ENCODE measurements at regions of chr1 and their contacts with region 1.

Region 1: DNA sequence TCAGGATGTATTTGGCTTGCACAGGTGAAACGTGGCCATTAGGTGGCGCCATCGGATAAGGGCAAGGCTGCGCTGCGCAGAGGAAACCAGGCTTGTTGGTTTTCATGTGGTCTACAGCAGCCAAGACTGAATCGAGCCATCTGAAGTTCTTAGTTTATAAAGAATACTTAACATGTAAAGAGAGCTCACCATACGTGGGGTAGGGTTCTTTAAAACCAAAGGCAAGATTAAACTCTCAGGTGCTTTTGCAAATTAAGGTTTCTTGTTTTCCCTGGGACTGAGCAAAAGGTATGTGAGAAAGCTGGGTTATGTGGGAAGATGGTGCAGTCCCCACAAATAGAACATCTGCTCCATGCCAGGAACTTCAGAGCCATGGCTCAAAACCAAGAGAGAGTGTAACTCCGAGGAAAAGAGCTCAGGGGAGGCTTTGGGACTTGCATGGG is 9.3 kb downstream of the MASP2 start:
- DNase-seq: peak; percentile 67
- ATAC-seq: peak; percentile 85
- H3K4me3 ChIP-seq: no peak overlapping the region
- H3K27ac ChIP-seq: no peak overlapping the region
- H3K4me1 ChIP-seq: no peaks in the 10 kb centered on the region
- H3K27me3 ChIP-seq: no peaks in the 10 kb centered on the region
- CTCF ChIP-seq: peak; percentile 96
- EP300 ChIP-seq: no peak
- POLR2A ChIP-seq: no peak
- RAD21 ChIP-seq: peak; percentile 94

Region 2: DNA sequence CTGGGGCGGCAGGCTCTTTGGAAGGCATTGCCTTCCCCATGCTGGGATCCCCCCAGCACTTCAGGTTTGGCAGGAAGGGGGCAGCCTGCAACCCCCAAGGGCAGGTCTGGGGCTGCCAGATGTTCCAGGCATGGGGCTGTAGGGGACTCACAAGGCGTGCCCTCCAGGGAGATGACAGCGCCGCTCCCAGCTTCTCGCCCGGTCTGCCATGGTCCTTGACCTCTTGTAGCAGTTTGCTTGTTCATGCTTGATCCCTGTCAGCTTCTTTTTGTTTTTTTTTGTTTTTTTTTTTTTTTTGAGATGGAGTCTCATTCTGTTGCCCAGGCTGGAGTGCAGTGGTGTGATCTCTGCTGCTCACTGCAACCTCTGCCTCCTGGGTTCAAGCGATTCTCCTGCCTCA is 46.9 kb before region 1 on chr1:
- CTCF ChIA-PET with region 1: no interaction called
- POLR2A ChIA-PET with region 1: no interaction called
- in situ Hi-C with region 1: no loop called
- intact Hi-C with region 1: no loop called
- DNase-seq: no peak
- ATAC-seq: peak; percentile 67
- H3K4me3 ChIP-seq: no peak overlapping the region
- H3K27ac ChIP-seq: no peak overlapping the region
- H3K4me1 ChIP-seq: no peaks in the 10 kb centered on the region; the same call in 1 of the 2 replicates
- H3K27me3 ChIP-seq: peaks cover 0 to 8% of the 10 kb centered on the region in 2 experiments; a peak in 4 of 5 replicates
- CTCF ChIP-seq: no peak
- EP300 ChIP-seq: no peak
- POLR2A ChIP-seq: no peak
- RAD21 ChIP-seq: no peak

Region 3: GRCh38 chr1:11059990-11060830 is 22.4 kb after region 1 on chr1 and contains the start of gene SRM:
- CTCF ChIA-PET with region 1: interaction called, 5 read pairs
- POLR2A ChIA-PET with region 1: interaction called, 9 read pairs
- in situ Hi-C with region 1: no loop called
- intact Hi-C with region 1: loop called (anchors 2 kb)
- DNase-seq: peak; percentile 76
- ATAC-seq: peak; percentile 94
- H3K4me3 ChIP-seq: peak within 1 kb of the TSS; percentile 85 to 97 (median 86)
- H3K27ac ChIP-seq: peak within 1 kb of the TSS; percentile 77
- H3K4me1 ChIP-seq: peaks cover 30% of the 10 kb centered on the region
- H3K27me3 ChIP-seq: no peaks in the 10 kb centered on the region; a peak in 1 of 5 replicates
- CTCF ChIP-seq: peak; percentile 38; the same call in 1 of the 2 replicates
- EP300 ChIP-seq: no peak
- POLR2A ChIP-seq: peak; percentile 67 to 77; a peak in 2 of 4 replicates
- RAD21 ChIP-seq: peak; percentile 32
- total RNA-seq, gene SRM: 30.3 and 31.8 TPM in 2 replicates

Region 4: GRCh38 chr1:11099310-11100149 is 61.8 kb after region 1 on chr1 and contains the start of gene EXOSC10:
- CTCF ChIA-PET with region 1: no interaction called
- POLR2A ChIA-PET with region 1: interaction called, 3 read pairs
- in situ Hi-C with region 1: no loop called
- intact Hi-C with region 1: loop called (anchors 5 kb)
- DNase-seq: peak; percentile 81
- ATAC-seq: peak; percentile 92
- H3K4me3 ChIP-seq: peak within 1 kb of the TSS; percentile 94 to 98 (median 95)
- H3K27ac ChIP-seq: peak within 1 kb of the TSS; percentile 85
- H3K4me1 ChIP-seq: peaks cover 20% of the 10 kb centered on the region
- H3K27me3 ChIP-seq: no peaks in the 10 kb centered on the region; a peak in 1 of 5 replicates
- CTCF ChIP-seq: 0 out of 2 replicates have a peak, but pooled peaks have one; percentile 17
- EP300 ChIP-seq: 0 out of 4 replicates have a peak, but pooled peaks of 1 of the 2 experiments have one; percentile 22
- POLR2A ChIP-seq: peak; percentile 65 to 83
- RAD21 ChIP-seq: peak; percentile 34; the same call in 1 of the 2 replicates
- total RNA-seq, gene EXOSC10: 67.6 and 68.7 TPM in 2 replicates